SK-N-SH (cell line): ENCODE measurements at regions of chr11 and their contacts with region 1.

Region 1: DNA sequence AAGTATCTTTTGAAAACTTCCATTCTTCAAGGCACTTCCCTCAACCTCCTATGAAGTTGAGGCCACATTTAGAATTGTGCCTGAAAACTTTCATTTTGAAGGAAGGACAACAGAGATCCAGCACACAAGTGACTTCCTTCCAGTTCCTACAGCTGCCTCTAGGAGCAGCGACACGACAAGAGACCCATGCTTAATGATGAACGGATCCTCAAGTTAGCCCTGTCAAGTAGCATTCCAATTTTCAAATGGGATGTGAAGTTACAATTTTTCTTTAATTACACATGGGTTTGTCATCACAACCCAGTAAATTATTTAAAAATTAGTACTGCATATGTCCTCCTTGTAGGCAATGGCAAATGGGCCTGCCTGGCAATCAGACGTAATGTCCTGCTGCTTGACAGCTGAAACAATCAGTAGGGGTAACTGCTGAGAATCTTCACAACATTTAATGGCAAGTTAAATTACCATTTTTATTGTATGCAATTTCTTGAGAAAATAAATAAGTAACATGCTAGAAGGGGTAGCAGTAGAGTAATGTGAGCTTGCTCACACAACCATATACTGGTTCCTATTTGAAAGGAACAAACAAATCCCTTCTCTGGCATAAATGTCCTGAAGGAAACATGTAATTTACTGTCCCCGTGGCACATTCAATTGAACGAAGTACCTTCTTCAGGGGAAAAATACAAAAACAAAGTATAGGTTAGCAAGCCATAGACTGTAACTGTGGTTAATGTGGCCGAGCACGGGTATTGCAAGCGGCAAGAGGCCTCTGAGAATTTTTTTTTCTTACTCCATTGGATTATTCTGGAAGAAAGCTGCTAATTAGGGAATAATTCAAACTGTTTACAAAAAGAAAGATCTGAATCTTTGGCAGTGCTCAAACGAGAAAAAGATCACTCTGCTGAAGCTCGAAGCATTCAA is 288.3 kb downstream of the CADM1 start:
- DNase-seq: no peak
- H3K4me3 ChIP-seq: no peak overlapping the region
- H3K27ac ChIP-seq: no peak overlapping the region
- H3K4me1 ChIP-seq: peaks cover 0 to 15% of the 10 kb centered on the region in 2 experiments; a peak in 2 of 4 replicates
- H3K27me3 ChIP-seq: no peaks in the 10 kb centered on the region
- CTCF ChIP-seq: peak; percentile 46
- EP300 ChIP-seq: no peak
- RAD21 ChIP-seq: peak; percentile 39

Region 2: DNA sequence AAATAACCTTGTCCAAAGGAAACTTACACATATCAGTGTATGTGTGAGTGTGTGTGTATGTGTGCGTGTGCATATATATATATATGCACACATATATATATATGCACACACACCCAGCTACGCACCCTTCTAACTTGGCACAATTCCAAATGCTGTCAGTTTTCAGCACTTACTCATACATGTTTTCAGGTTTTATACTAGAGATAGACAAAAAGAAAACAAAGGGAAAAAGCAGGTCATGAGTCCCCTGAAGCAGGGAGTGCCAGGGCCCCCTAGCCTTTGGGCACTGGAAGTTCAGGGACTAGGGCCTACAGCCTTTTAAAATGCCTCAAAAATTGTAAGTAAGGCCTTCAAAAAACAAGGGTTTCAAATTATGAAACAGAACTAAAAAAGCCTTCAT is 22.8 kb after region 1 on chr11:
- CTCF ChIA-PET with region 1: interaction called, 10 read pairs
- POLR2A ChIA-PET with region 1: no interaction called
- DNase-seq: no peak
- H3K4me3 ChIP-seq: no peak overlapping the region
- H3K27ac ChIP-seq: no peak overlapping the region
- H3K4me1 ChIP-seq: peaks cover 0 to 3% of the 10 kb centered on the region in 2 experiments; a peak in 2 of 4 replicates
- H3K27me3 ChIP-seq: no peaks in the 10 kb centered on the region
- CTCF ChIP-seq: peak; percentile 30; the same call in 1 of the 2 replicates
- EP300 ChIP-seq: no peak
- RAD21 ChIP-seq: 0 out of 2 replicates have a peak, but pooled peaks have one; percentile 5

Region 3: GRCh38 chr11:115396533-115396932 is 180.6 kb after region 1 on chr11:
- CTCF ChIA-PET with region 1: no interaction called
- POLR2A ChIA-PET with region 1: no interaction called
- DNase-seq: no peak
- H3K4me3 ChIP-seq: no peak overlapping the region
- H3K27ac ChIP-seq: no peak overlapping the region
- H3K4me1 ChIP-seq: peaks cover 0 to 10% of the 10 kb centered on the region in 2 experiments; a peak in 2 of 4 replicates
- H3K27me3 ChIP-seq: no peaks in the 10 kb centered on the region
- CTCF ChIP-seq: no peak
- EP300 ChIP-seq: no peak
- RAD21 ChIP-seq: no peak